ENCODE measurements at regions of chr19 and their contacts with region 1.

Region 1: DNA sequence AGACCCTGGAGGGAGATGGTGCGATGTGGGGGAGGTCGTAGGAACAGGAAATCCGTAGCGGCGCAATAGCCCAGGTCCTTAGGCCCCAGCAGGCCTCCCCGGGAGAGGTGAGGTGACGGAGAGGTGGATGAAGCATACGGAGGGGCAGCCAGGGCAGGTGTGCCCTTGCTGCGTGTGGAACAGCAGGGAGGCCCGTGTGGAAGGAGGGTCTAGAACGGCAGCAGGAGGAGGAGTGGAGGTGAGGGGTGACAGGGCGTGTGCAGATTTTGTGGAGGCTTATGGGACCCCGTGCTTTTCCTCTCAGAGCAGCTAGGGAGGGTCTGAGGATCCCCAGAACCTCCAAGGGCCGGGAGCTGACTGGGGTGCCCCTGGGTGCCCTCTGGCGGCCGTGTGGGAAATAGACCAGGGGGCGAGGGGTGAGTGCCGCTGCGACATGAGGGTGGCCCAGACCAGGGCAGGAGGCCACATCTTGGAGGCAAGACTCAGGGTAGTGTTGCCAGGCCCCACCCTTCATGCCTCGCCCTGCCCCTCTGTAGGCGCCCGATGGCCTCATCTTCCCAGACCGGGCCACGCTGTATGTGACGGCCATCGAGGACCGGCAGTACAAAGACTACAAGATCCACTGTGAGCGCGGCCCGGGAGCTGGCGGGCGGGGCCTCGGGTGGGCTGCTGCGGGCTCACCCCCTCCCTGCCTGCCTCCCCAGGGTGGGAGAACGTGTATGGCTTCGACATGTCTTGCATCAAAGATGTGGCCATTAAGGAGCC is 5.0 kb upstream of the ADM5 start:
- DNase-seq: peak; percentile 57 to 75
- ATAC-seq: peak; percentile 50 to 70
- H3K4me3 ChIP-seq: no peak overlapping the region
- H3K27ac ChIP-seq: 0 out of 6 replicates have a peak overlapping the region, but pooled peaks of 1 of the 2 experiments have one; percentile 2
- H3K4me1 ChIP-seq: peaks cover 27% of the 10 kb centered on the region
- CTCF ChIP-seq: peak; percentile 65
- EP300 ChIP-seq: no peak
- POLR2A ChIP-seq: no peak
- RAD21 ChIP-seq: peak in 1 of 2 experiments; percentile 17; a peak in 1 of 5 replicates

Region 2: DNA sequence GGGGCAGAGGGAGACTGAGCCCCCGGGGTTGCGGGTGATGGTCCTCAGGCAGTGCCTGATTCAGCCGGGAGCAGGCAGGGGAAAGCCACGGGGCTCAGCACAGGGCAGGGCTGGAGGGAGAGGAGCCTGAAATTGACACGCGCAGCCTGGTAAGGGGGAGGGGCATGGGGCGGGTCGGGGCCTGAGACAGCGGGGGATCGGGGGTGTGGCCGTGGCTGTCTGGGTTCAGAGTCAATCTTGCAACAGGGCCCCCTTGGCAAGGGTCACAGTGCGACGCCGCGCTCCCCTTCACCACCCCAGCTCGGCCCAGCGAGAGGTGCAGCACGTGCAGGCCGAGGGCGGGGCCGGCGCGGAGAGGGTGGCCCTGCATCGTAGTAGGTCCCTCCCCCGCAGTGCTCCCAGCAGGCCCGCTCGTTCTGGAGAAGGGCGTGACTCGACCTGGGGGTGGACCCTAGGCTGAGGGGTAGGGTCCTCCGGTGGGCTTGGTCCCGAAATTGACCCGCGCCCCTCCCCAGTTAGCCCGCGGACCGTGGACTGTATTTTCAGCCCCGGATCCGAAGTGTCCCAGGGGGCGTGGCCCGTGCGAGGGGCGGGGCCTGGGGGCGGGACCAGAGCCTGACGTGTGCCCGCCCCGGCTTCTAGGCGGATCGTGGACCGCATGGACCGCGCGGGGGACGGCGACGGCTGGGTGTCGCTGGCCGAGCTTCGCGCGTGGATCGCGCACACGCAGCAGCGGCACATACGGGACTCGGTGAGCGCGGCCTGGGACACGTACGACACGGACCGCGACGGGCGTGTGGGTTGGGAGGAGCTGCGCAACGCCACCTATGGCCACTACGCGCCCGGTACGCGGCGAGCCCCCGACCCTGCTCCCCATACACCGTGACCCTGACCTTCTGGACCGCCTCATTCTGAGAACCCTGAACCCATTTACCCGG is 150.6 kb before region 1 on chr19:
- CTCF ChIA-PET with region 1: no interaction called
- POLR2A ChIA-PET with region 1: no interaction called
- DNase-seq: peak; percentile 79 to 85
- ATAC-seq: peak; percentile 91 to 92
- H3K4me3 ChIP-seq: peak overlapping the region; percentile 58
- H3K27ac ChIP-seq: peak overlapping the region; percentile 9 to 73; a peak in 3 of 6 replicates
- H3K4me1 ChIP-seq: peaks cover 7% of the 10 kb centered on the region; the same call in 1 of the 3 replicates
- CTCF ChIP-seq: peak; percentile 49
- EP300 ChIP-seq: no peak
- POLR2A ChIP-seq: no peak; the same call in 1 of the 2 replicates
- RAD21 ChIP-seq: no peak

Region 3: DNA sequence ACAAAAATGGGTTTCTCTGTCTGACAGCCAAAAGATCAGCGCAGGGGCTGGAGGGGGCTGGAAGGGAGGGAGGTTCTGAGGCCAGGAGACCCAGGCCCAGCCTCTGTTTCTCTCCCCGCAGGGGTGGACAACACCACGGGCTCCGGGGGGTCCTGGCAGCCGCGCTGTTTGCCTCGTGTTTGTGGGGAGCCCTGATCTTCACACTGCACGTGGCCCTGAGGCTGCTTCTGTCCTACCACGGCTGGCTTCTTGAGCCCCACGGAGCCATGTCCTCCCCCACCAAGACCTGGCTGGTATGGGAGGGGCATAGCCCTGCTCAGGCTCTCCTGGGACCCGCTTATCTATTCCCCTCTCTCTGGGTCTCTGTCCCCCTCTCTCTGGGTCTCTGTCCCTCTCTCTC is 16.2 kb after region 1 on chr19:
- CTCF ChIA-PET with region 1: interaction called, 42 read pairs
- POLR2A ChIA-PET with region 1: no interaction called
- DNase-seq: no peak
- ATAC-seq: peak; percentile 48 to 62; a peak in 4 of 6 replicates
- H3K4me3 ChIP-seq: no peak overlapping the region
- H3K27ac ChIP-seq: no peak overlapping the region
- H3K4me1 ChIP-seq: peaks cover 6% of the 10 kb centered on the region; the same call in 1 of the 3 replicates
- CTCF ChIP-seq: no peak
- EP300 ChIP-seq: no peak
- POLR2A ChIP-seq: no peak
- RAD21 ChIP-seq: no peak

Region 4: GRCh38 chr19:49832556-49832955 is 148.2 kb after region 1 on chr19:
- CTCF ChIA-PET with region 1: interaction called, 13 read pairs
- POLR2A ChIA-PET with region 1: no interaction called
- DNase-seq: no peak
- ATAC-seq: no peak
- H3K4me3 ChIP-seq: no peak overlapping the region
- H3K27ac ChIP-seq: no peak overlapping the region
- H3K4me1 ChIP-seq: no peaks in the 10 kb centered on the region
- CTCF ChIP-seq: no peak
- EP300 ChIP-seq: no peak
- POLR2A ChIP-seq: no peak
- RAD21 ChIP-seq: no peak

Region 5: DNA sequence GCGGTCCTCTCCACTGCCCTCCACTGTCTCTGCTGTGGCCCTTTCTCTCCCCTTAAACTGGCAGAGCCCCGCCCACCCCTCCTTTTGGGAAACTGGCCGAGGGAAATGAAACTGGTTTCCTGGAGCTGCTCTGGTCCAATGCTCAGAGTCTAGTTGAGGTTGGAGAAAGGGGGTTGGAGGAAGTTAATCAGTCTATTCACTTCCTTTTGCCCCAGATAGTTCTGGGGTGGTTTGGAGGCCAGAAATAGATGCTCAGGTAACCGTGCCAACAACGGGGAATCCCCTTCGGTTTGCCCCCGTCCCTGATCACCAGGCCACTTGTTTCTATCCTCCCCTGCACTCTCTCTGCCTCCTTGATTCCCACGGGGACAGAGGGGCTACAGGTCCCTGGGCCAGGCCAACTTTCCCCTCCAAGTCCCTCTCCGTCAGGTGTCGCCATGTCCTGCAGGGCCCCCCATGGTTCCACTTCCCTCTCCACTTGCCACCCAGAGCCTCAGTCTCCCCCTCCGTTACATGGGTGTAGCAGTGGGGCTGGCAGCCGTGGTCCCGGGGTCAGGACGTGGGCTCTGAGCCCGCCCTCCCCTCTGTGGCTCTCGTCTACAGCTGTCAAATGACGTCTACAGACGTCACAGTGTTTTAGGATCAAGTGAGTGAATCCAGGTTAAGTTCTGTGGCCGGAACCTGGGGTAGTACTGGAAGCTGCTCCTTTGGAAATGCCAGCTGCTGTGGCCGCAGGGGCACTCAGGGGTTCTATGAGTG is 212.6 kb after region 1 on chr19 and contains the start of gene IL4I1:
- CTCF ChIA-PET with region 1: no interaction called
- POLR2A ChIA-PET with region 1: no interaction called
- DNase-seq: no peak
- ATAC-seq: peak; percentile 3 to 29; a peak in 4 of 6 replicates
- H3K4me3 ChIP-seq: no peak within 1 kb of the TSS
- H3K27ac ChIP-seq: peak within 1 kb of the TSS in 1 of 2 experiments; percentile 44; a peak in 3 of 6 replicates
- H3K4me1 ChIP-seq: peaks cover 12% of the 10 kb centered on the region; the same call in 2 of the 3 replicates
- CTCF ChIP-seq: no peak
- EP300 ChIP-seq: no peak
- POLR2A ChIP-seq: no peak
- RAD21 ChIP-seq: no peak
- polyA plus RNA-seq, gene IL4I1: 0.15 and 0.18 TPM in 2 replicates

Measured in A549 (cell line).